ENCODE measurements at regions of chr10 and their contacts with region 1.

Region 1: GRCh38 chr10:59240582-59241183 is 64.2 kb downstream of the PHYHIPL start:
- DNase-seq: no peak
- H3K4me3 Mint-ChIP-seq: no peak overlapping the region
- H3K27ac Mint-ChIP-seq: no peak overlapping the region
- H3K4me1 Mint-ChIP-seq: no peaks in the 10 kb centered on the region
- H3K27me3 Mint-ChIP-seq: no peaks in the 10 kb centered on the region

Region 2: GRCh38 chr10:58781873-58782488 is 458.7 kb before region 1 on chr10:
- CTCF ChIA-PET with region 1: no interaction called
- intact Hi-C with region 1: loop called (anchors 5 kb)
- DNase-seq: peak; percentile 4
- H3K4me3 Mint-ChIP-seq: no peak overlapping the region
- H3K27ac Mint-ChIP-seq: no peak overlapping the region
- H3K4me1 Mint-ChIP-seq: no peaks in the 10 kb centered on the region
- H3K27me3 Mint-ChIP-seq: peaks cover 8% of the 10 kb centered on the region

Region 3: DNA sequence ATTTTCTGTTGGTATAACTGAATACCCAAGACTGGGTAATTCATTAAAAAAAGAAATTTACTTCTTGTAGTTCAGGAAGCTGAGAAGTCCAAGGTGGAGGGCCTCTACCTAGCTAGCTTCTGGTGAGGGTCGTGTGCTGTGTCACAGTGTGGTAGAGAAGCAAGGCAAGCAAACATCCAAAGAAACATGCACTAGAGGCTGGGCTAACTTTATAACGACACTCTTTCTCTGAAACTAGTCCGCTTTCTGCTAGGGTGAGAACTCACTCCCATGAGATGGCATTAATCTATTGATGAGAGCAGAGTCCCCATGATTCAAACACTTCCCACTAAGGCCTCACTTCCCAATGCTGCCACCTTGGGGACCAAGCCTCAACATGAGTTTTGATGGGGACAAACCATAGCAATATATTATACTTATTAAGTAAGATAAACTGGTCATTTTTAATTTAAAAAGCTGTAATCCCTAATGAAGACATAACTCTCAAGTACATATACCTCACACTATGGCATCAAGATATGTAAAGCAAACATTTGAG is 13.5 kb before region 1 on chr10:
- CTCF ChIA-PET with region 1: no interaction called
- intact Hi-C with region 1: no loop called
- DNase-seq: no peak
- H3K4me3 Mint-ChIP-seq: no peak overlapping the region
- H3K27ac Mint-ChIP-seq: no peak overlapping the region
- H3K4me1 Mint-ChIP-seq: no peaks in the 10 kb centered on the region
- H3K27me3 Mint-ChIP-seq: no peaks in the 10 kb centered on the region